SK-N-SH (cell line): ENCODE measurements at regions of chr2 and their contacts with region 1.

Region 1: GRCh38 chr2:46335391-46336282 is 38.4 kb downstream of the EPAS1 start:
- DNase-seq: no peak
- H3K4me3 ChIP-seq: peak overlapping the region; percentile 21 to 50
- H3K27ac ChIP-seq: peak overlapping the region; percentile 100
- H3K4me1 ChIP-seq: peaks cover 86 to 97% of the 10 kb centered on the region in 2 experiments
- H3K27me3 ChIP-seq: no peaks in the 10 kb centered on the region
- CTCF ChIP-seq: no peak
- EP300 ChIP-seq: 0 out of 4 replicates have a peak, but pooled peaks of 1 of the 2 experiments have one; percentile 29
- RAD21 ChIP-seq: no peak

Region 2: DNA sequence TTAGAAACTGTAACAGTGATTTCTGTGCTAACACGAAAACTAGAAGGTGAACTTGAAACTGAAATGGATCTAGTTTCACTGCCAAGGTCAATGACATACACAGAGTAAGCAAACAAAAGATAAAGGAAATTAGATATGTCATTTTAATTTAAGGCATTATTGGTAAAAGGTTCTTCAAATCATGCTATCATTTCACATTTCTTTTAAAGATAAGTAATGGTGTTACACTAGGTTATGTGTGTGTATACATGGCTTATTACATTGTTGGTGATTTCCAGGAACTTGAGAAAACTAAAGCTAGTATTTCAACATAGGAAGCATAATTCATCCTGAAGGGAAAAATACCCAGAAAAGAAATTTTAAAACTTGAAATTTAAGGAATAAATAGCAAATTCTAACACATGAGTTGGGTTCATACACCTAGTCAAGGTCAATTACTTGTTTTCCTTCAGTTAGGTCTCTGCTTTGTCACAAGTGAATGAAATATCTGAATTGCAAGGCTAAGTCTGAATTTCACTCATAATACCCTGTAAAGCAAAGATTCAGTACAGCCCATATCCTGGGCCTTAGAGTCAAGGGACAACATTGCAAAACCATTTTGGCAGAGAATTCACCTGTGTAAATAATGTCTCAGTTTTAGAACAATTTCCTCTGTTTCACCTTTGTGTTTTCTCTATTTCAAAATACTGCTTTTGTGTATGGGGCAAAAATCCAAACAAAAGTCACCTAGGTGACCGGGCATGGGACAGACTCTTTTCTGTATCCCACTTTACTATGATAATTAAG is 866.1 kb before region 1 on chr2:
- CTCF ChIA-PET with region 1: no interaction called
- POLR2A ChIA-PET with region 1: no interaction called
- DNase-seq: no peak
- H3K4me3 ChIP-seq: no peak overlapping the region
- H3K27ac ChIP-seq: no peak overlapping the region
- H3K4me1 ChIP-seq: peaks cover 0 to 11% of the 10 kb centered on the region in 2 experiments; a peak in 2 of 4 replicates
- H3K27me3 ChIP-seq: no peaks in the 10 kb centered on the region
- CTCF ChIP-seq: no peak
- EP300 ChIP-seq: no peak
- RAD21 ChIP-seq: no peak

Region 3: DNA sequence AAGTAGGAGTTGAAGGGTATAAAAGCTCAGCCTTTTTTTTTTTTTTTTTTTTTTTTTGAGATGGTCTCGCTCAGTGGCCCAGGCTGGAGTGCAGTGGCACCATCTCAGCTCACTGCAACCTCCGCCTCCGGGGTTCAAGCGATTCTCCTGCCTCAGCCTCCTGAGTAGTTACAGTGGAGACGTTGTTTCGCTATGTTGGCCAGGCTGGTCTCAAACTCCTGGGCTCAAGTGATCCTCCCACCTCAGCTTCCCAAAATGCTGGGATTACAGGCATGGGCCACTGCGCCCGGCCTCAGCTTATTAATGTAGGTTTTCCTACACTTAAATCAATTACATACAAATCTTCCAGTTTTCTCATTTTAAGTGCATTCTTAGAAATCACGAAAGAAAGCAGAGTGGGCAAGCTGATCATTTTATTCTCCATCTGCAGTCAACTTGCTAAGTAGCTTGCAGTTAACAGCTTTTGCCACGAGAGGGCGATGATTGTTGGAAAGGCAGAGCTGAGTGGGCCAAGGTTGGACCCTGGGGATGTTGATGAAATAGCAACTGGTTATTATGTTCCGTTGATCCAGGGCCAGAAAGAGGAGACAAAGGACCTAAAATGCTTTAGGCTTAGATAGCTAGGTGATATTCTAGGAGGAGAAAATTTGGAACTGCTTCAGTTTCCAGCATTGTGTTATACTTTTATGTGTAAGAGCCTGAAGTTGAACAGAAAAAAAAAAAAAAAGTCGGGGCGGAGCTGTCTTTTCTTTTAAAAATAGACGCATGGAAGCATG is 272.8 kb before region 1 on chr2:
- CTCF ChIA-PET with region 1: interaction called, 24 read pairs
- POLR2A ChIA-PET with region 1: interaction called, 3 read pairs
- DNase-seq: peak; percentile 82
- H3K4me3 ChIP-seq: no peak overlapping the region; a peak in 1 of 4 replicates
- H3K27ac ChIP-seq: no peak overlapping the region
- H3K4me1 ChIP-seq: peaks cover 14 to 25% of the 10 kb centered on the region in 2 experiments
- H3K27me3 ChIP-seq: no peaks in the 10 kb centered on the region
- CTCF ChIP-seq: peak; percentile 99
- EP300 ChIP-seq: no peak
- RAD21 ChIP-seq: peak; percentile 97

Region 4: DNA sequence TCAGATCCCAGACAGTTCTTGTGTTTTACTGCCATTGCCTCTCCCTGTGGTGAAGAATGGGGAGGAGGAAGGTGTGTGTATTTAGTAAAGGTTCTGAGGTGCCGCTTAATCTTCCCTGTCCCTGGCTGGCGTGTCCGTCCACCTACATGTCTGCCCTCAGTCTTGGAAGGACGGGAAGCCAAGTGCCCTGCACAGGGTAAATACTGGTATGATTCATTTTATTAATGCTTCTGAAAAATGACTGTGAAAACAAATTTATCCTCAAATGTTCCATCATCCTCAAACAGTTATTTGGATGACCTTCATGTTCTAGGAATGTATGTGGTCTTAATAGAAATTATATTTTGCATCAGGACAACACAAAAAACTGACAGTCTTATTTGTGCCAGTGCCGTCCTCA is 31.8 kb before region 1 on chr2:
- CTCF ChIA-PET with region 1: interaction called, 57 read pairs
- POLR2A ChIA-PET with region 1: interaction called, 97 read pairs
- DNase-seq: no peak
- H3K4me3 ChIP-seq: no peak overlapping the region
- H3K27ac ChIP-seq: peak overlapping the region; percentile 20 to 63; a peak in 3 of 4 replicates
- H3K4me1 ChIP-seq: peaks cover 18 to 70% of the 10 kb centered on the region in 2 experiments; a peak in 3 of 4 replicates
- H3K27me3 ChIP-seq: no peaks in the 10 kb centered on the region
- CTCF ChIP-seq: no peak
- EP300 ChIP-seq: no peak
- RAD21 ChIP-seq: no peak

Region 5: DNA sequence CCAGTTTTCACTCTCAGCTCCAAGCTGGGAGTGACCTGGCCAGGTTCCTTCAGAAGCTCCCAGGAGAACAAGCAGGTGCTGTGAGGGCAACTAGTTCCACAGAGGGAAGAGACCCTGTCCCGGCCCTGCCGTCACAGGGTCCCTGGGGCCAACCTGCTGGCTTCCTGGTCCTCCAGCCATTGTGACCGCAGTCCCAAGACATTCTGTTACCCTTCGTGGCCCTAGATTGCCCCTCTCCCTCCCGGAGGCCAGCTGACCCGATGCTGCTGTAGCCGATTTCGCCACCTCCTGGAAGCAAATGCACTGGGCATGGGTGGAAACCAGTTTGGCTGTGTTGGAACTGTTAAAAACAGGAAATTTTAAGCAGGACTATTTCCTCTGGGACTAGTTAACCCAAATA is 17.0 kb after region 1 on chr2:
- CTCF ChIA-PET with region 1: interaction called, 194 read pairs
- POLR2A ChIA-PET with region 1: interaction called, 12 read pairs
- DNase-seq: no peak
- H3K4me3 ChIP-seq: no peak overlapping the region
- H3K27ac ChIP-seq: peak overlapping the region in 1 of 2 experiments; percentile 47; a peak in 1 of 4 replicates
- H3K4me1 ChIP-seq: peaks cover 0 to 61% of the 10 kb centered on the region in 2 experiments; a peak in 2 of 4 replicates
- H3K27me3 ChIP-seq: no peaks in the 10 kb centered on the region
- CTCF ChIP-seq: no peak; the same call in 1 of the 2 replicates
- EP300 ChIP-seq: no peak
- RAD21 ChIP-seq: no peak

Region 6: DNA sequence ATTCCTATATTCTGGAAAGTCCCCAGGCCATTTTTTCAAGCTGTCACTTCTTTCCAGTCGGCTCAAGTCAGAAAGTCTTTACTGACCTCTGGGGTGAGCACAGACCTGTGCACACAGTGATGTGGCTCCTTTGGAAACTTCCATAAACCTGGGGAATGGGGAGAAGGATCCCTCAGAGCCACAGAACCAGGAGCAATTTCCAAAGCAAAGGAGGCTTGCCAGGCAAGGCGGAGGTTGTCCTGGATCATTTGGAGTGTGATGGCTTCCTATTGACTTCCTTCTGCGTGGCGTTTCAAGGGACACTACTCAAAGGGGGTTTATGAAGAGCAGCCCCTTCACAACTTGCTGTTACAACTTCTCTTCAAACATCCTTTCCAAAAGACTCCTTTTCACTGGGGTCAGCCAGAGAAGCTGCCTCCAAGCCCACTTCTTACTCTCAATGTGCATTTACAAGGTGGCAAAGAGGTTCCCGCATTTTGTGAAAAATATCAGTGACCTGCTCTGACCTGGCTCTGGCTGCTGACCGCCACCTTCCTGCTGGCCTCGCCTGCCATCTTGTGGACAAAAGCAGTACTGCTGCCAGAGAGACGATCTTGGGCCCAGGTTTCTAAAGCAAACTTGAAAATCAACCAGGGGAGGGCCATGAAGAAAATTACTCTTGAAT is 125.5 kb after region 1 on chr2:
- CTCF ChIA-PET with region 1: interaction called, 17 read pairs
- POLR2A ChIA-PET with region 1: interaction called, 4 read pairs
- DNase-seq: peak; percentile 79
- H3K4me3 ChIP-seq: no peak overlapping the region; a peak in 1 of 4 replicates
- H3K27ac ChIP-seq: peak overlapping the region in 1 of 2 experiments; percentile 72; a peak in 1 of 4 replicates
- H3K4me1 ChIP-seq: peaks cover 0 to 21% of the 10 kb centered on the region in 2 experiments; a peak in 1 of 4 replicates
- H3K27me3 ChIP-seq: no peaks in the 10 kb centered on the region
- CTCF ChIP-seq: peak; percentile 100
- EP300 ChIP-seq: no peak
- RAD21 ChIP-seq: peak; percentile 100

Region 7: DNA sequence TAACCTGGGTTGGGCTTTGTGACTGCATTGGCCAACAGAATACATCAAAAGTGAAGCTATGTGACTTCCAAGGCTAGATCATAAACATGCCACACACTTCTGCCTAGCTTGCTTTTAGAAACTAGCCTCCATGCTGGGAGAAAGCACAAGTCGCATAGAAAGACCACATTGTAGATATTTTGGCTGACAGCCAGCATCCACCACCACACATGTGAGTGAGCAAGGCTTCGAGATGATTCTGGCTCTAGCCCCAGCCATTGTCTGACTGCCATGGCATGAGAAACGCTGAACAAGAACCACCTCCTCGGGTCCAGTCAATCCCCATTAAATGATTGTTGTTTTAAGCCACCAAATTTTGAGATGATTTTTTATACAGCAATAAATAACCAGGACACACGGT is 886.3 kb after region 1 on chr2:
- CTCF ChIA-PET with region 1: no interaction called
- POLR2A ChIA-PET with region 1: no interaction called
- DNase-seq: no peak
- H3K4me3 ChIP-seq: no peak overlapping the region
- H3K27ac ChIP-seq: no peak overlapping the region
- H3K4me1 ChIP-seq: peaks cover 18 to 27% of the 10 kb centered on the region in 2 experiments
- H3K27me3 ChIP-seq: no peaks in the 10 kb centered on the region
- CTCF ChIP-seq: no peak
- EP300 ChIP-seq: no peak
- RAD21 ChIP-seq: no peak